Posterior vena cava (tissue), 2 donors: ENCODE measurements at regions of chr1 and their contacts with region 1.

Region 1: DNA sequence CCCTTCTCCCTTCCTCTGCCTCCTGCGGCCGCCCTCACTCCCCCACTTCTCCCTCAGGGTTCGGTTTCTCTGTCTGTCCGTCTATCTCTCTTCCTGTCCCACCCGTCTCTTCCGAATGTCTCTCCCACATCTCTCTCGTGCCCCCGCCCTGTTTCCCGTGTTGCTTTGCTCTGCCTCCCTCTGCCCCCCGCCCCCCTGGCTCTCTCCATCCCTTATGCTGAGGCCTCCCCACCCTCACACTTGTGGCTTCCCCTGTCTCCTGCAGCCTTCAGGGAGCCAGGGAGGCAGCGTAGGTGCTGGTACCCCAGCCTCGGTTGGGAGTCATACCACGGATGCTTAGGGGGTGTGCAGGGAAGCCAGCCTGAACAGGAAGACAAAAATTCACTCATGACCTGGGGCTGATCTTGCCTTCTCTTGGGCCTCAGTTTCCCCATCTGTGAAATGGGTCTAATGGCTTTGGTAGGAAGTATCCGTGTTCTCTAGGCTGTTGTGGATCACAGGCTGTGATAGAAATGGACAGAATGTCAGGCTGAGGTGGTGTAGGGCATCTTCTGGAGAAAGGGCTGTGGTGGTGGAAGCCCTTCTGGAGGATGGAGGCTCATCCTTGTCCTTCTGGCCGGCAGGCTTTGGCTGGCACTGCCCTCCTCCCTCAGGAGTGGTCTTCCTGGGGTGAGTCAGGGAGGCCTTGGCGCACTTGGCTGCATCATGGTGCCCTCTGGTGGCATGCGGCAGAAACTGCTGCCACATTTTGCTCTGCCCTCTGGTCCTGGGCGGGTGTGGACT is 55.5 kb downstream of the FOXO6 start:
- DNase-seq: no peak

Region 2: GRCh38 chr1:41274752-41275545 is 141.8 kb before region 1 on chr1:
- intact Hi-C with region 1: loop called (anchors 5 kb)
- DNase-seq: no peak

Region 3: GRCh38 chr1:41442546-41443251 is 26.0 kb after region 1 on chr1:
- intact Hi-C with region 1: loop called in 1 of 2 experiments (anchors 1 kb)
- DNase-seq: peak; percentile 43